ENCODE measurements at regions of chr3 and their contacts with region 1.

Region 1: GRCh38 chr3:44624749-44625480 is at the start of gene ZNF197:
- DNase-seq: peak; percentile 77 to 84
- ATAC-seq: peak; percentile 98 to 99
- H3K4me3 ChIP-seq: peak within 1 kb of the TSS; percentile 69 to 93 (median 81)
- H3K27ac ChIP-seq: peak within 1 kb of the TSS; percentile 82 to 93 (median 92)
- H3K4me1 ChIP-seq: peaks cover 11 to 30% of the 10 kb centered on the region in 2 donors
- H3K27me3 ChIP-seq: no peaks in the 10 kb centered on the region
- CTCF ChIP-seq: peak in 1 of 5 experiments; percentile 40
- POLR2A ChIP-seq: peak in 1 of 2 donors; percentile 58
- total RNA-seq, gene ZNF197: 14.3 to 21.5 (median 19.6) TPM

Region 2: GRCh38 chr3:44280631-44281030 is 344.3 kb before region 1 on chr3:
- in situ Hi-C with region 1: no loop called
- intact Hi-C with region 1: no loop called
- DNase-seq: no peak
- ATAC-seq: no peak
- H3K4me3 ChIP-seq: no peak overlapping the region
- H3K27ac ChIP-seq: no peak overlapping the region
- H3K4me1 ChIP-seq: no peaks in the 10 kb centered on the region
- H3K27me3 ChIP-seq: no peaks in the 10 kb centered on the region
- CTCF ChIP-seq: no peak
- POLR2A ChIP-seq: no peak

Region 3: GRCh38 chr3:44477312-44478030 is 147.4 kb before region 1 on chr3 and contains the start of gene ZNF445:
- in situ Hi-C with region 1: no loop called
- intact Hi-C with region 1: loop called (anchors 1 kb)
- DNase-seq: peak; percentile 56 to 70
- ATAC-seq: peak; percentile 91 to 96
- H3K4me3 ChIP-seq: peak within 1 kb of the TSS; percentile 66 to 79 (median 70)
- H3K27ac ChIP-seq: peak within 1 kb of the TSS; percentile 34 to 82 (median 69)
- H3K4me1 ChIP-seq: peaks cover 14 to 19% of the 10 kb centered on the region in 2 donors
- H3K27me3 ChIP-seq: no peaks in the 10 kb centered on the region
- CTCF ChIP-seq: peak in 1 of 5 experiments; percentile 16
- POLR2A ChIP-seq: peak; percentile 20 to 30
- total RNA-seq, gene ZNF445: 3.6 to 6.2 (median 3.8) TPM

Region 4: GRCh38 chr3:44499149-44499898 is 125.6 kb before region 1 on chr3:
- in situ Hi-C with region 1: no loop called
- intact Hi-C with region 1: no loop called
- DNase-seq: no peak
- ATAC-seq: no peak
- H3K4me3 ChIP-seq: no peak overlapping the region
- H3K27ac ChIP-seq: no peak overlapping the region
- H3K4me1 ChIP-seq: no peaks in the 10 kb centered on the region
- H3K27me3 ChIP-seq: no peaks in the 10 kb centered on the region
- CTCF ChIP-seq: no peak
- POLR2A ChIP-seq: no peak

Region 5: DNA sequence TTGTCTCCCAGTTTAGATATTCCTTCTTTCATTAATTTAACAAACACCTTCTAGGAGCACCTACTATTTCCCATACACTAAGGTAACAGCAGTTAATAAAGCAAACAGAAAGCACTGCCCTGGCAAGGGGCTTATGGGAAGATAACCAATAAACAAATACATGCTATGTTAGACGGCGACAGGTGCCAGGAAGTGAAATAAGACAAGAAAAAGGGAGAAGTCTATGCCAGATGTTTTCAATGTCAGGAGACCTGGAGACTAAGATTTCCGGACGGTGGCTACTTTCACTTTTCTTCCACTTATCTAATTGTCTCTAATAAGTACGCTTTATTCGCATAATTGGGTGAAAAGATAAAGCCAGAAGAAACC is 114.9 kb before region 1 on chr3:
- in situ Hi-C with region 1: no loop called
- intact Hi-C with region 1: loop called (anchors 5 kb)
- DNase-seq: no peak
- ATAC-seq: no peak
- H3K4me3 ChIP-seq: peak overlapping the region; percentile 64 to 83 (median 77)
- H3K27ac ChIP-seq: peak overlapping the region; percentile 88 to 91 (median 89)
- H3K4me1 ChIP-seq: peaks cover 13 to 15% of the 10 kb centered on the region in 2 donors
- H3K27me3 ChIP-seq: no peaks in the 10 kb centered on the region
- CTCF ChIP-seq: no peak
- POLR2A ChIP-seq: no peak

Region 6: GRCh38 chr3:44648564-44649229 is 23.8 kb after region 1 on chr3 and contains the start of gene ZNF35:
- in situ Hi-C with region 1: no loop called
- intact Hi-C with region 1: loop called (anchors 1 kb)
- DNase-seq: peak; percentile 38 to 57
- ATAC-seq: peak; percentile 77 to 93
- H3K4me3 ChIP-seq: peak within 1 kb of the TSS; percentile 77 to 92 (median 84)
- H3K27ac ChIP-seq: peak within 1 kb of the TSS; percentile 64 to 78 (median 70)
- H3K4me1 ChIP-seq: peaks cover 7 to 17% of the 10 kb centered on the region in 2 donors
- H3K27me3 ChIP-seq: no peaks in the 10 kb centered on the region
- CTCF ChIP-seq: no peak
- POLR2A ChIP-seq: no peak
- total RNA-seq, gene ZNF35: 2.6 to 8.1 (median 5.3) TPM

Region 7: GRCh38 chr3:44734646-44735168 is 109.8 kb after region 1 on chr3:
- in situ Hi-C with region 1: no loop called
- intact Hi-C with region 1: no loop called
- DNase-seq: no peak
- ATAC-seq: no peak
- H3K4me3 ChIP-seq: peak overlapping the region in 1 of 4 donors; percentile 35
- H3K27ac ChIP-seq: no peak overlapping the region
- H3K4me1 ChIP-seq: peaks cover 5 to 9% of the 10 kb centered on the region in 2 donors
- H3K27me3 ChIP-seq: no peaks in the 10 kb centered on the region
- CTCF ChIP-seq: no peak
- POLR2A ChIP-seq: no peak